Aorta (tissue), 5 donors: ENCODE measurements at regions of chr5 and their contacts with region 1.

Region 1: GRCh38 chr5:138449501-138450239 is 10.8 kb downstream of the REEP2 start:
- DNase-seq: peak; percentile 91 to 98
- ATAC-seq: peak; percentile 94
- H3K4me3 ChIP-seq: no peak overlapping the region
- H3K27ac ChIP-seq: no peak overlapping the region
- H3K4me1 ChIP-seq: no peaks in the 10 kb centered on the region
- H3K27me3 ChIP-seq: no peaks in the 10 kb centered on the region

Region 2: GRCh38 chr5:138482638-138483037 is 33.0 kb after region 1 on chr5:
- intact Hi-C with region 1: no loop called
- DNase-seq: no peak
- ATAC-seq: no peak
- H3K4me3 ChIP-seq: no peak overlapping the region
- H3K27ac ChIP-seq: no peak overlapping the region
- H3K4me1 ChIP-seq: no peaks in the 10 kb centered on the region
- H3K27me3 ChIP-seq: no peaks in the 10 kb centered on the region

Region 3: DNA sequence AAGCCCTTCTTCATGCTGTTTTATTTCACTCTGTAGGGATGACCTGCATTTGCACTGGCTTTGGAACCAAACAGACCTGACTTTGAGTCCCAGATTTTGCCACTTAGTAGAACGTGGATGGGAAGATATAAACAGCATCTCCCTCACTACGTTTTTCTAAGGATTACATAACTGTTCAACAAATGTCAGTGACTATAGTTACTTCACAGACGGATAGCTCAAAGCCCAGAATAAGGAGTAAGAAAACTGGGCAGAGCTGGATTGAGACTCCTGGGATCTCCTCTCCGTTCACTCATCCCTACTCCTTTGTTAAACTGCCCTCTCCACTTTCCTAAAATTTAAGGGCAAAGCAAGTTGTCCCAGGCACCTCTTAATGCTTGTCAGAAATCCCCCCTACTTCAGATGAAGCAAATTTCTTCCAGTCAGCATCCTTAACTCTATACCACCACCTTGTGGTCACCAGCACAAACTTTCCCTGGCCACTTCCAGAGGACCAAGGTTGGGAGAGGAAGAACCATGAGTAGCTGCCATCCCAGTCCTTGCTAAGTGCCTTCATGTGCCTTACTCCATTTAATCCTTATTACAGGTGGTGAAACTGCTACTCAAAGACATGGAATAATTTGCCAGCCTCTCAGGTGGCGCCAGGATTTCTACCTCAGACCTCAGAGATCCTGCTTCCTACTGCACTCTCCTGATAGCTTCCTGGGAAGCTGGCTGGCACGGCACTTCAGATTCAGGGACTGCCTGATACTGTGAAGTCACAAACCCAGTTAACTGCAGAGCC is 54.0 kb after region 1 on chr5:
- intact Hi-C with region 1: loop called (anchors 1 kb)
- DNase-seq: no peak
- ATAC-seq: peak; percentile 91
- H3K4me3 ChIP-seq: no peak overlapping the region
- H3K27ac ChIP-seq: peak overlapping the region in 1 of 2 donors; percentile 14
- H3K4me1 ChIP-seq: no peaks in the 10 kb centered on the region
- H3K27me3 ChIP-seq: no peaks in the 10 kb centered on the region

Region 4: GRCh38 chr5:138508963-138509362 is 59.3 kb after region 1 on chr5:
- intact Hi-C with region 1: loop called in 1 of 2 experiments (anchors 1 kb)
- DNase-seq: no peak
- ATAC-seq: no peak
- H3K4me3 ChIP-seq: no peak overlapping the region
- H3K27ac ChIP-seq: no peak overlapping the region
- H3K4me1 ChIP-seq: no peaks in the 10 kb centered on the region
- H3K27me3 ChIP-seq: no peaks in the 10 kb centered on the region

Region 5: GRCh38 chr5:138542956-138543729 is 93.5 kb after region 1 on chr5 and contains the start of gene ETF1:
- intact Hi-C with region 1: loop called in 1 of 2 experiments (anchors 5 kb)
- DNase-seq: peak; percentile 100
- ATAC-seq: peak; percentile 98
- H3K4me3 ChIP-seq: peak within 1 kb of the TSS; percentile 78 to 91
- H3K27ac ChIP-seq: peak within 1 kb of the TSS; percentile 72 to 94
- H3K4me1 ChIP-seq: peaks cover 0 to 2% of the 10 kb centered on the region in 2 donors
- H3K27me3 ChIP-seq: no peaks in the 10 kb centered on the region
- total RNA-seq, gene ETF1: 69.2 to 101 TPM

Region 6: GRCh38 chr5:138568061-138568824 is 118.6 kb after region 1 on chr5:
- intact Hi-C with region 1: no loop called
- DNase-seq: no peak
- ATAC-seq: no peak
- H3K4me3 ChIP-seq: no peak overlapping the region
- H3K27ac ChIP-seq: no peak overlapping the region
- H3K4me1 ChIP-seq: no peaks in the 10 kb centered on the region
- H3K27me3 ChIP-seq: no peaks in the 10 kb centered on the region